A673 (cell line): ENCODE measurements at regions of chr1 and their contacts with region 1.

Region 1: GRCh38 chr1:156054500-156055280 is at the start of gene LAMTOR2:
- DNase-seq: peak; percentile 100
- H3K4me3 ChIP-seq: peak within 1 kb of the TSS; percentile 99
- H3K27ac ChIP-seq: peak within 1 kb of the TSS; percentile 95
- H3K4me1 ChIP-seq: peaks cover 9% of the 10 kb centered on the region
- H3K27me3 ChIP-seq: no peaks in the 10 kb centered on the region
- CTCF ChIP-seq: no peak
- total RNA-seq, gene LAMTOR2: 52.0 and 63.6 TPM in 2 replicates

Region 2: GRCh38 chr1:155961937-155962336 is 92.8 kb before region 1 on chr1:
- CTCF ChIA-PET with region 1: no interaction called
- POLR2A ChIA-PET with region 1: no interaction called
- intact Hi-C with region 1: no loop called
- DNase-seq: peak; percentile 70
- H3K4me3 ChIP-seq: no peak overlapping the region
- H3K27ac ChIP-seq: peak overlapping the region; percentile 71
- H3K4me1 ChIP-seq: peaks cover 20% of the 10 kb centered on the region
- H3K27me3 ChIP-seq: no peaks in the 10 kb centered on the region
- CTCF ChIP-seq: peak; percentile 31; the same call in 1 of the 2 replicates

Region 3: DNA sequence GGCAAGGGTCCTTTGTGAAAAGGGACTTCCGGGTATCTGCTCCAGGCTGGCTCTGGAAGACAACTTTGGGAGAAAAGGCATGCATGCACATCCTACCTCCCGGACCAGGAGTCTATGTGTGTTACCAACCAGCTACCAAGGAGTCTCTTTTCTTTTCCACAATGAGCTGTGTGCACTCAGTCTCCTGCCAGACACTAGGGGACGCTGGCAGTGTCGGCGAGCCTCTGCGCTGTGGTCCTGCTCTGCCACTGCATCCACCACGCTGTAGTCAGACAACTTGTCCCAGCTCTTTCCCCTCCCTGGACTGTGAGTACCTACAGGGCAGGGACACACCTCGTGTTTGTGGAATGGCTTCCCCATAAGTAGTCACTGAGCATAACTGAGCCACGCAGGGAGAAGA is 28.8 kb before region 1 on chr1:
- CTCF ChIA-PET with region 1: interaction called, 13 read pairs
- POLR2A ChIA-PET with region 1: no interaction called
- intact Hi-C with region 1: no loop called
- DNase-seq: peak; percentile 78
- H3K4me3 ChIP-seq: no peak overlapping the region
- H3K27ac ChIP-seq: no peak overlapping the region
- H3K4me1 ChIP-seq: no peaks in the 10 kb centered on the region
- H3K27me3 ChIP-seq: no peaks in the 10 kb centered on the region
- CTCF ChIP-seq: peak; percentile 84

Region 4: DNA sequence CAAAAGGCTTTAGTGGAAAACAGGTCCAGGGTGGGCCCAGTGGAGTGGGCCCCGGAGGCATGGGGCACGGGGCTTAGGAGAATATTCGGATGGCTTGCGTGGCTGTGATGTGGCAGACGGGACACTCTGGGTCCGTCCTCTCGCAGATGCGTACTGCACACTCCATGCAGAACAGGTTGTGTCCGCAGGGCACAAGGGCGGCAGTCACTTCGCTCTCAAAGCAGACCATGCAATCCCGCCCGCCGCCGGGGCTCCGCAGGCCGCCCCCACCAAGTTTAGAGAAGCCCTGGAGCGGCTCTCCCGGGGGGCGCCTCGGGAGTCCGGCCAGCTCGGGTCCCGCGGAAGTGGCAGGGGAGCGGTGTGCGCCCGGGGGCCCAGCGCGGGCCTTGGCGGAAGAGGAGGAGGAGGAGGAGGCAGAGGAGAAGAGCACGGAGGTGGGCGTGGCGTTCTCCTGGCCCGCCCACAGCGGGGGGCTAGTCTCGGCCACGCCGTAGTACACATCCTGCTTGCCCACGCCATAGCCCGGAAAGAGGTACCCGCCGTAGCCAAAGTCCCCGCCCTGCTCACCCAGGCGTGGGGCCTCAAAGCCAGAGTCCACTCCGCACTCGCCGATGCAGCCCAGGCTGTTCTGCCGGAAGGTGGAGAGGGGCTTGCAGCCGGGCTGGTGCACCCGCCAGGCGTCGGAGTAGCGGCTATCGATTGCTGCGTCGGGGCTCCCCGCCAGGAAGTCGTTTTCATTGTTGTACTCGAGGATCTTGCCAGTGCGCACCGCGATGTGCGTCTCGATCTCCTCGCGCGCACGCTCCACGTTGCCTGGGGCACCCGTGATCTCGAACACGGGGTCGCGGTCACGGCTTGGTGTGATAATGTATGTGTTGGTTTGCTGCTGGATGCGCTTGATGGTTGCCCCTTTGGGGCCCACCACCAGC is 22.1 kb after region 1 on chr1:
- CTCF ChIA-PET with region 1: no interaction called
- POLR2A ChIA-PET with region 1: no interaction called
- intact Hi-C with region 1: no loop called
- DNase-seq: peak; percentile 78
- H3K4me3 ChIP-seq: peak overlapping the region; percentile 27
- H3K27ac ChIP-seq: peak overlapping the region; percentile 63
- H3K4me1 ChIP-seq: peaks cover 77% of the 10 kb centered on the region
- H3K27me3 ChIP-seq: no peaks in the 10 kb centered on the region
- CTCF ChIP-seq: no peak